ENCODE measurements at regions of chr2 and their contacts with region 1.

Region 1: DNA sequence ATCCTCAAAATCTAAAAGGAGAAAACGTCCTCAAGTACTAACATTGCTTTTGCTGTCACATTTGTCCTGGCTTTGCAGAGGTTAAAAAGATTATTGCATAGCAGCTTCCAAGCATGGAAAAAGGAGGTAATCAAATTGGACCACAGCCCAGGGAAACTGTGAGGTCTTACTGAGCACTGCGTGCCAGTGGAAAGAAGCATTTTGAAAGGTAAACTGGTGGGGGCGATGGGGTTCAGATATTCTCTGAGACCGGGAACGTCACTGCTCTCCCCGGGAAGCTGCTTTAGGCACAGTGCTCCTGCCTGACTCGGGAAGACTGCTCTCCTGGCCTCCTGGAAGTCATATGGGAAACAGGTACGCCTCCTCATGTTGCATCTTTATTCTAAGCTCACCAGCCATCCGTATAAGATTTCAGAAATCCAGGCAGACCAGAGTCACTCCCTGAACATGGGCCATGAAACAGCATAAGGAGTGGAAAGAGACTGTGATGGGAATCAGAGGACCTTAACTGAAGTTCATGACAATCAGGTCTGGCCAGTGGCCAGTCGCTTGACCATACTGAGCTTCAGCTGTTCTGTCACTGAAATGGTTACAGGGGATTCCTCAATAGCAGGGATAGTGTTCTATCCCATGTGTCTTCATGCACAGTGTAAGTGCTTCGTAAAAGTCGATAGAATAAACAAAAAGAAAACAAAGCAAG is 284.1 kb downstream of the TRIB2 start:
- DNase-seq: peak in 1 of 2 donors; percentile 83
- ATAC-seq: peak; percentile 36 to 90 (median 82)
- H3K4me3 ChIP-seq: peak overlapping the region in 9 of 10 donors; percentile 2 to 41 (median 30)
- H3K27ac ChIP-seq: peak overlapping the region in 9 of 10 donors; percentile 13 to 75 (median 63)
- H3K4me1 ChIP-seq: peaks cover 0 to 51% (median 30%) of the 10 kb centered on the region in 9 donors
- H3K27me3 ChIP-seq: no peaks in the 10 kb centered on the region
- CTCF ChIP-seq: no peak

Region 2: GRCh38 chr2:11829947-11830707 is 1170.7 kb before region 1 on chr2:
- intact Hi-C with region 1: loop called in 9 of 10 experiments (anchors 2 to 10 kb)
- DNase-seq: peak; percentile 51 to 69
- ATAC-seq: peak; percentile 78 to 93 (median 89)
- H3K4me3 ChIP-seq: peak overlapping the region in 7 of 10 donors; percentile 25 to 45 (median 29)
- H3K27ac ChIP-seq: peak overlapping the region; percentile 21 to 90 (median 75)
- H3K4me1 ChIP-seq: peaks cover 8 to 47% (median 29%) of the 10 kb centered on the region in 9 donors
- H3K27me3 ChIP-seq: no peaks in the 10 kb centered on the region
- CTCF ChIP-seq: peak in 6 of 9 donors; percentile 20 to 58 (median 44)

Region 3: DNA sequence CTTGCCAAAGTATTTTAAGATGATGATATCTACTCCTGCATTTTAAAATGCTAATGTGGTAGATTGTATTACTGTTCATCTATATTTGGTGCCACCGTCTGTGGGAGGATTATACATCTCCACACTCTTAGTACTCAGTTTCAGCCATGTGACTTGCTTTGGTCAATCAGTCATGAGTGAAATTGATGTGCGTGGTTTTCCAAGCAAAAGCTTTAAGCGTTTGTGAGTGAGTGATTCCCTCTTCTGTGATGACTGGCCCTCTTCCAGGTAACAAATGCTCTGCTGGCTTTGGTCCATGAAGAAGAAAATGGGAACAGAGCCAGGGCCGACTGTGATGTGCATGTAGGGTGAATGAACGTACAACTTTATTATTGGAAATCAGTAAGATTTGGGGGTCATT is 924.0 kb before region 1 on chr2:
- intact Hi-C with region 1: no loop called
- DNase-seq: no peak
- ATAC-seq: no peak
- H3K4me3 ChIP-seq: no peak overlapping the region
- H3K27ac ChIP-seq: no peak overlapping the region
- H3K4me1 ChIP-seq: no peaks in the 10 kb centered on the region
- H3K27me3 ChIP-seq: no peaks in the 10 kb centered on the region
- CTCF ChIP-seq: no peak

Region 4: GRCh38 chr2:12456293-12457151 is 544.3 kb before region 1 on chr2:
- intact Hi-C with region 1: no loop called
- DNase-seq: peak; percentile 79 to 85
- ATAC-seq: peak; percentile 80 to 97 (median 94)
- H3K4me3 ChIP-seq: peak overlapping the region in 7 of 10 donors; percentile 21 to 35 (median 26)
- H3K27ac ChIP-seq: peak overlapping the region; percentile 9 to 84 (median 60)
- H3K4me1 ChIP-seq: peaks cover 0 to 46% (median 19%) of the 10 kb centered on the region in 9 donors
- H3K27me3 ChIP-seq: no peaks in the 10 kb centered on the region
- CTCF ChIP-seq: no peak

Region 5: GRCh38 chr2:12948961-12949353 is 51.9 kb before region 1 on chr2:
- intact Hi-C with region 1: loop called in 1 of 10 experiments (anchors 5 kb)
- DNase-seq: no peak
- ATAC-seq: no peak
- H3K4me3 ChIP-seq: no peak overlapping the region
- H3K27ac ChIP-seq: peak overlapping the region in 1 of 10 donors; percentile 12
- H3K4me1 ChIP-seq: peaks cover 0 to 5% (median 0%) of the 10 kb centered on the region in 9 donors
- H3K27me3 ChIP-seq: peaks cover 0 to 4% (median 0%) of the 10 kb centered on the region in 7 donors
- CTCF ChIP-seq: no peak

Region 6: DNA sequence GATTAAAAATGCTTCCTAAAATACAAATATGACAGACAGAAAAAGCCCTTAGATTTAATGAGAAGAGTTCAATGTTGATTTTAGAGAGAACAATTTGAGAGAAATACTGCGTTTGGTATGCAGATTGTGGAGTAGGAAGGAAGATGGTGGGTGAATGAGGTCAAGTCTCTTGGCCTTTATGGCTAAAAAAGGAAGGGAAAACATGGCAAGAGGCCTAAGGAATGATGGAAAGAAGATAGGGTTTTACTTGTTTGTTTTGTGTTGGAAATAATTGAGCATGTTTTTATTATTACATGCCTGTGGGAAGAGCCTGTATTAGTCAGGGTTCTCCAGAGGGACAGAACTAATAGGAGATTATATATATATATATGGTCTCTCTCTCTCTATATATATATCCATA is 34.0 kb after region 1 on chr2:
- intact Hi-C with region 1: no loop called
- DNase-seq: no peak
- ATAC-seq: no peak
- H3K4me3 ChIP-seq: no peak overlapping the region
- H3K27ac ChIP-seq: no peak overlapping the region
- H3K4me1 ChIP-seq: no peaks in the 10 kb centered on the region
- H3K27me3 ChIP-seq: peaks cover 0 to 4% (median 0%) of the 10 kb centered on the region in 7 donors
- CTCF ChIP-seq: no peak

Measured in heart right ventricle (tissue), 16 donors.